ENCODE measurements at regions of chr19 and their contacts with region 1.

Region 1: GRCh38 chr19:29873024-29873800 is 61.4 kb downstream of the CCNE1 start:
- DNase-seq: peak; percentile 85
- ATAC-seq: peak; percentile 81
- H3K4me3 Mint-ChIP-seq: peak overlapping the region; percentile 73
- H3K27ac Mint-ChIP-seq: no peak overlapping the region
- H3K4me1 Mint-ChIP-seq: peaks cover 2% of the 10 kb centered on the region; the same call in 1 of the 2 replicates
- H3K27me3 Mint-ChIP-seq: peaks cover 26% of the 10 kb centered on the region
- CTCF ChIP-seq: peak; percentile 72

Region 2: DNA sequence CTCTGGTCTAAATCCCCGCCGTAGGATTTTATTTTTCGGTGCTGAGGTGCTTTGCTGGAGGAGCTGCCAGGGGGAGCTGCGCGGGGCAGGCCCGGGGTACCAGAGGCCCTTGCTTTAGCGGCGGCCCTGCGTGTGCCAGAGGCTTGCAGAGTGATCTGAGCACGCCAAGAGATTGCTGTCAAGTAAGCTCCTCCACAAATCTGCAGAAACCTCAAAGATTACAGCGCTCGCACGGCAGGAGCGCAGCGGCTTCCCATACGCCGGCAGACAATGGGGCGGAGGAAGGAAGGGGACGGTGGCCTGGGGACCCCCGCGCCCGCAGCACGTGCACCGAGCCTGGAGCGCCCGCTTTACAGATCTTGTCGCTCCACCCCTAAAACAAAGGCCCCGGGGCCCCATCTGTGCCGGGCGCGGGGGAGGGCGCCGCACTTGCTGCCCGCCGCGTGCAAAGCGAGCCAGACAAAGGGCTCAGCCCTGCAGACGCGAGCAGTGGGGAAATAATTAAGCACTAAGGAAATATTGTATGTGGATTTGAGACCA is 149.0 kb before region 1 on chr19:
- CTCF ChIA-PET with region 1: interaction called, 16 read pairs
- POLR2A ChIA-PET with region 1: no interaction called
- DNase-seq: peak; percentile 62
- ATAC-seq: peak; percentile 80
- H3K4me3 Mint-ChIP-seq: peak overlapping the region; percentile 60
- H3K27ac Mint-ChIP-seq: no peak overlapping the region
- H3K4me1 Mint-ChIP-seq: peaks cover 15% of the 10 kb centered on the region
- H3K27me3 Mint-ChIP-seq: peaks cover 24% of the 10 kb centered on the region
- CTCF ChIP-seq: no peak

Region 3: DNA sequence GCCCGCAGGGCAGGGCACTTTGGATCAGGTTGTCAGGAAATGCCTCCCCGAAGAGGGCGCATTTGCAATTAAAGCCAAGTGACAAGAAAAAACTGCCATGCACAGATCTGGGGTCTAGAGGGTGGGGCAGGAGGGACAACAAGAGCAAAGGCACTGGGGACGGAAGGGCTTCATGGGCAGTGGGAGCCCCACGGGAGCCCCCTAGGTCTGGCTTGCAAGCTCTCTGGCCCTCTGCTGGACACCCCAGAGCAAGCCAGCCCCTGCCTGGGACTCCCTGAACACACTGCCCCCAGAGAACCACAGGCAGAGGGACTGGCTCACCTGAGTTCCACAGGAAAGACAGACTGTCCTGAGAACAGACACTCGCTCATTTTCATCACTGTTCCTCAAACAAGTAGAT is 128.0 kb before region 1 on chr19:
- CTCF ChIA-PET with region 1: interaction called, 12 read pairs
- POLR2A ChIA-PET with region 1: no interaction called
- DNase-seq: peak; percentile 69
- ATAC-seq: peak; percentile 98
- H3K4me3 Mint-ChIP-seq: no peak overlapping the region
- H3K27ac Mint-ChIP-seq: no peak overlapping the region
- H3K4me1 Mint-ChIP-seq: no peaks in the 10 kb centered on the region
- H3K27me3 Mint-ChIP-seq: no peaks in the 10 kb centered on the region; the same call in 1 of the 2 replicates
- CTCF ChIP-seq: no peak

Region 4: DNA sequence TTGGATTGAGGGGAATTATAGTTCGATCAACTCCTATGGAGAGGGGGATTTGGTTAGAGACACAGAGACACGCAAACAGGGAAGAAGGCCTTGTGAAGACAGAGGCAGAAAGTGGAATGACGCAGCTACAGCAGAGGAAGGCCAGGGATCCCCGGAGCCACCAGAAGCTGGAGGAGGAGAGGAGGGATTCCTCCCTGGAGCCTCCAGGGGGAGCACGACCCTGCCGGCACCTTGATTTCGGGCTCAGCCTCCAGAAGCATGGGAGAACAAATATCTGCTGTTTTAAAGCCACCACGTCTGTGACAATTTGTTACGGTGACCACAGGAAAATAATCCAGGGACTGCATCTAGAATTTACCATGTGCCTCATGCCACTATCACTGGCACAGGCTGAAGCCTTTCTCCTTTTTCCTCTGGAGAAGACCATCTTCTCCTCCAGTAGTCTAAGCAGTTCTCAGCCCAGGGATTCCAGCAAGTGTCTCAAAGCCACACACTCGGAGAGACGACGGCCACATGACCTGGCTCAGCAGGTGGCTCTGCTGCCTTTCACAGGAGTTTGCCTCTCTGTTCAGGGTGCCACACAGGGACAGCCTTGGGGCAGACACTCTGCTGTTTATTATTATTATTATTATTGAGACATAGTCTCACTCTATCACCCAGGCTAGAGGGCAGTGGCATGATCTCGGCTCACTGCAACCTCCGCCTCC is 101.4 kb before region 1 on chr19:
- CTCF ChIA-PET with region 1: interaction called, 17 read pairs
- POLR2A ChIA-PET with region 1: no interaction called
- DNase-seq: peak; percentile 76
- ATAC-seq: peak; percentile 91
- H3K4me3 Mint-ChIP-seq: no peak overlapping the region
- H3K27ac Mint-ChIP-seq: no peak overlapping the region
- H3K4me1 Mint-ChIP-seq: peaks cover 15% of the 10 kb centered on the region
- H3K27me3 Mint-ChIP-seq: no peaks in the 10 kb centered on the region; the same call in 1 of the 2 replicates
- CTCF ChIP-seq: peak; percentile 33; the same call in 1 of the 2 replicates

Region 5: GRCh38 chr19:29779921-29780320 is 93.3 kb before region 1 on chr19:
- CTCF ChIA-PET with region 1: interaction called, 21 read pairs
- POLR2A ChIA-PET with region 1: interaction called, 3 read pairs
- DNase-seq: peak; percentile 51
- ATAC-seq: peak; percentile 88
- H3K4me3 Mint-ChIP-seq: no peak overlapping the region
- H3K27ac Mint-ChIP-seq: peak overlapping the region; percentile 41; the same call in 1 of the 2 replicates
- H3K4me1 Mint-ChIP-seq: peaks cover 11% of the 10 kb centered on the region
- H3K27me3 Mint-ChIP-seq: no peaks in the 10 kb centered on the region; the same call in 1 of the 2 replicates
- CTCF ChIP-seq: no peak

Region 6: GRCh38 chr19:29785955-29786589 is 87.1 kb before region 1 on chr19:
- CTCF ChIA-PET with region 1: interaction called, 27 read pairs
- POLR2A ChIA-PET with region 1: no interaction called
- DNase-seq: peak; percentile 65
- ATAC-seq: peak; percentile 89
- H3K4me3 Mint-ChIP-seq: no peak overlapping the region
- H3K27ac Mint-ChIP-seq: no peak overlapping the region
- H3K4me1 Mint-ChIP-seq: no peaks in the 10 kb centered on the region
- H3K27me3 Mint-ChIP-seq: no peaks in the 10 kb centered on the region
- CTCF ChIP-seq: no peak

Region 7: GRCh38 chr19:29844891-29845572 is 28.2 kb before region 1 on chr19:
- CTCF ChIA-PET with region 1: interaction called, 28 read pairs
- POLR2A ChIA-PET with region 1: no interaction called
- DNase-seq: peak; percentile 93
- ATAC-seq: peak; percentile 83
- H3K4me3 Mint-ChIP-seq: peak overlapping the region; percentile 94
- H3K27ac Mint-ChIP-seq: peak overlapping the region; percentile 93
- H3K4me1 Mint-ChIP-seq: peaks cover 23% of the 10 kb centered on the region
- H3K27me3 Mint-ChIP-seq: peaks cover 16% of the 10 kb centered on the region
- CTCF ChIP-seq: no peak

Measured in WTC11 (cell line).